AG04450 (cell line): ENCODE measurements at regions of chr2 and their contacts with region 1.

Region 1: GRCh38 chr2:237572021-237572741 is 5.8 kb downstream of the PRLH start:
- DNase-seq: peak; percentile 85
- H3K4me3 ChIP-seq: no peak overlapping the region
- H3K27ac ChIP-seq: no peak overlapping the region
- H3K27me3 ChIP-seq: peaks cover 3% of the 10 kb centered on the region
- CTCF ChIP-seq: peak; percentile 98

Region 2: GRCh38 chr2:237092920-237093781 is 479.0 kb before region 1 on chr2:
- CTCF ChIA-PET with region 1: interaction called, 21 read pairs
- POLR2A ChIA-PET with region 1: no interaction called
- DNase-seq: peak; percentile 65
- H3K4me3 ChIP-seq: no peak overlapping the region
- H3K27ac ChIP-seq: peak overlapping the region; percentile 43
- H3K27me3 ChIP-seq: no peaks in the 10 kb centered on the region
- CTCF ChIP-seq: peak; percentile 75

Region 3: DNA sequence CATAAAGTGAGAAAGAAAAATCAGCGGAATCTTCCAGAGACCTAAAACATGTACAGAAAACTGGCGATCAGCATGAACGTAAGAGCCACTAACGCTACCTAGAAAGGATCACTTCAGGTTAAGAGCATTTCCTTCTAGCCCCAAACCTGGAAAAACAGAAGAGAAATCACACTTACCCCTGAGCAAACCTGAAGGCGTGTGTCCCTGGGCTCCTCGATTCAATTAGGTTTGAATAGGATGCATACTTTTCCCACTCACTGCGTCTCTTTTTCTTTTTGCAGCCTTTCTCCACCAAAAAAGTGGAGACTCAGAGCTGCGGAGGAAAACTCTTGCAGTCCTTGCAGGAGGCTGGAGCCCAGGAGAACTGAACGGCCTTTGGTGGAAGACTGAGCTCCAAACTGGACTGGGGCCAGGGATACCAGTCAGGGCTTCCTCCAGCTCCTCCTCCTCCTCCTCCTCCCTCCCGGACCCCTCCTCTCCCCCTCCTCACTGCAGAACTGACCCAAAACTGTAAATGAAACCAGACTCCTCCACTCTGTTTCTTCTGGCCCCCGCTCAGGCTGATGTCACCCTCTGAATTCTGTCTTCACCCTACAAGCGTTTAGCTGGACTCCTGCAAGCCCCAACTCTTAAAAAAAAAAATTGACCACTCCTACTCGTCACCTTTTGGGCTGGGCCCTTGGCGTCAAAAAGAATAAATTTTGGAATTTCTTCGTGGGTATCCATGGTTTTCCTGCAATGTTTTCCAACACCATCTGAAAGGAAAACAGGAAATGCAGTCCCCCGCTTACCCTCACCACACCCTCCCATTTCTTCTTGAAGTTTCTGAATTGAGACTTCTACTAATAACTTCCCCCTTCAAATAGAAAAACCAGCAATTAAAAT is 158.2 kb before region 1 on chr2 and contains the start of gene COL6A3:
- CTCF ChIA-PET with region 1: interaction called, 90 read pairs
- POLR2A ChIA-PET with region 1: no interaction called
- DNase-seq: peak; percentile 96
- H3K4me3 ChIP-seq: peak within 1 kb of the TSS; percentile 100
- H3K27ac ChIP-seq: peak within 1 kb of the TSS; percentile 94
- H3K27me3 ChIP-seq: no peaks in the 10 kb centered on the region
- CTCF ChIP-seq: no peak
- polyA plus RNA-seq, gene COL6A3: 1,384 and 2,107 TPM in 2 replicates

Region 4: GRCh38 chr2:237500681-237501424 is 71.3 kb before region 1 on chr2:
- CTCF ChIA-PET with region 1: interaction called, 12 read pairs
- POLR2A ChIA-PET with region 1: no interaction called
- DNase-seq: peak; percentile 97
- H3K4me3 ChIP-seq: peak overlapping the region; percentile 18
- H3K27ac ChIP-seq: peak overlapping the region; percentile 96
- H3K27me3 ChIP-seq: no peaks in the 10 kb centered on the region
- CTCF ChIP-seq: no peak

Region 5: GRCh38 chr2:237547841-237548416 is 24.3 kb before region 1 on chr2:
- CTCF ChIA-PET with region 1: interaction called, 12 read pairs
- POLR2A ChIA-PET with region 1: no interaction called
- DNase-seq: no peak
- H3K4me3 ChIP-seq: no peak overlapping the region
- H3K27ac ChIP-seq: no peak overlapping the region
- H3K27me3 ChIP-seq: no peaks in the 10 kb centered on the region
- CTCF ChIP-seq: no peak

Region 6: DNA sequence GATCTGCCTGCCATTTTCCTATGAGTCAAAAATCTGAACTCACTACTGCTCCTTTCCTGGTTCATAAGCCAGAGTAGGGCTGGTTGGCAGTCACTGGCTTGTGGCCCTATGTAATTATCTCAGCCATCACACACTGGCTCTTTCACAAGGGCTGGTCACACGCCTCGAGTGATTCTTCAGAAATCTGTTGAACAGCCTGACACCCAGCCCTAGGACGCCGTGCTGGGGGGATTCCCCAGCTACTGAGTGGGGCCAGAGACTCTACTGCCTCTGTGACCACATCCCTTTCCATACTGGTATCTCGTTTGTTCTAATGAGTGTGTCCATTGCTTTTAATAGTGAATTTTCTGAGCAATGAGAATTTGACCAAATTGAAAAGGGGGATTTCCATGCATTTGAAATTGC is 180.6 kb after region 1 on chr2:
- CTCF ChIA-PET with region 1: interaction called, 10 read pairs
- POLR2A ChIA-PET with region 1: no interaction called
- DNase-seq: no peak
- H3K4me3 ChIP-seq: no peak overlapping the region
- H3K27ac ChIP-seq: no peak overlapping the region
- H3K27me3 ChIP-seq: no peaks in the 10 kb centered on the region
- CTCF ChIP-seq: no peak